ENCODE measurements at regions of chr15 and their contacts with region 1.

Region 1: GRCh38 chr15:84658080-84658787 is at the start of gene NMB:
- DNase-seq: peak; percentile 83
- ATAC-seq: peak; percentile 76
- H3K4me3 Mint-ChIP-seq: peak within 1 kb of the TSS; percentile 83
- H3K27ac Mint-ChIP-seq: peak within 1 kb of the TSS; percentile 88
- H3K4me1 Mint-ChIP-seq: peaks cover 41% of the 10 kb centered on the region
- H3K27me3 Mint-ChIP-seq: no peaks in the 10 kb centered on the region
- CTCF ChIP-seq: no peak
- total RNA-seq, gene NMB: 2.9 and 3.8 TPM in 2 replicates

Region 2: GRCh38 chr15:84600851-84601838 is 57.1 kb before region 1 on chr15 and contains the start of gene ZSCAN2:
- CTCF ChIA-PET with region 1: interaction called, 7 read pairs
- POLR2A ChIA-PET with region 1: interaction called, 13 read pairs
- intact Hi-C with region 1: loop called (anchors 1 kb)
- DNase-seq: peak; percentile 86
- ATAC-seq: peak; percentile 94
- H3K4me3 Mint-ChIP-seq: peak within 1 kb of the TSS; percentile 97
- H3K27ac Mint-ChIP-seq: peak within 1 kb of the TSS; percentile 88
- H3K4me1 Mint-ChIP-seq: peaks cover 73% of the 10 kb centered on the region
- H3K27me3 Mint-ChIP-seq: no peaks in the 10 kb centered on the region
- CTCF ChIP-seq: no peak
- total RNA-seq, gene ZSCAN2: 16.0 and 18.7 TPM in 2 replicates

Region 3: DNA sequence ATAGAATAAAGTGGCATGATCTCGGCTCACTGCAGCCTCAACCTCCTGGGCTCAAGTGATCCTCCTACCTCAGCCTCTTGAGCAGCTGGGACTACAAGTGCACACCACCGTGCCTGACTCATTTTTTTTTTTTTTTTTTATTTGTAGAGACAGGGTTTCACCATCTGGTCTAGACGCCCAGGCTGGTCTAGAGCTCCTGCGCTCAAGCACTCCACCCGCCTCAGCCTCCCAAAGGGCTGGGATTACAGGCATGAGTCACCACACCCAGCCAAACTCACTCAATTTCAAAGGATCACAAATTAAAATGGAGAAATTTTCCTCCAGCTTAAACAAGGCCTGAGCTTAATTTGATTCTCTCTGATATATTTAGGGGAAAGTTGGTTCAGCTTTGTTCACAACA is 27.1 kb after region 1 on chr15:
- CTCF ChIA-PET with region 1: no interaction called
- POLR2A ChIA-PET with region 1: interaction called, 4 read pairs
- intact Hi-C with region 1: loop called (anchors 1 kb)
- DNase-seq: no peak
- ATAC-seq: no peak
- H3K4me3 Mint-ChIP-seq: no peak overlapping the region
- H3K27ac Mint-ChIP-seq: no peak overlapping the region
- H3K4me1 Mint-ChIP-seq: peaks cover 43% of the 10 kb centered on the region
- H3K27me3 Mint-ChIP-seq: no peaks in the 10 kb centered on the region
- CTCF ChIP-seq: no peak

Region 4: GRCh38 chr15:84734794-84735479 is 76.7 kb after region 1 on chr15:
- CTCF ChIA-PET with region 1: interaction called, 4 read pairs
- POLR2A ChIA-PET with region 1: interaction called, 11 read pairs
- intact Hi-C with region 1: no loop called
- DNase-seq: peak; percentile 41
- ATAC-seq: peak; percentile 90
- H3K4me3 Mint-ChIP-seq: peak overlapping the region; percentile 73
- H3K27ac Mint-ChIP-seq: peak overlapping the region; percentile 91
- H3K4me1 Mint-ChIP-seq: peaks cover 46% of the 10 kb centered on the region
- H3K27me3 Mint-ChIP-seq: no peaks in the 10 kb centered on the region
- CTCF ChIP-seq: no peak

Region 5: GRCh38 chr15:84883433-84883832 is 225.2 kb after region 1 on chr15:
- CTCF ChIA-PET with region 1: interaction called, 4 read pairs
- POLR2A ChIA-PET with region 1: interaction called, 7 read pairs
- intact Hi-C with region 1: loop called (anchors 1 kb)
- DNase-seq: no peak
- ATAC-seq: no peak
- H3K4me3 Mint-ChIP-seq: no peak overlapping the region
- H3K27ac Mint-ChIP-seq: no peak overlapping the region
- H3K4me1 Mint-ChIP-seq: no peaks in the 10 kb centered on the region
- H3K27me3 Mint-ChIP-seq: peaks cover 5% of the 10 kb centered on the region
- CTCF ChIP-seq: no peak

Region 6: DNA sequence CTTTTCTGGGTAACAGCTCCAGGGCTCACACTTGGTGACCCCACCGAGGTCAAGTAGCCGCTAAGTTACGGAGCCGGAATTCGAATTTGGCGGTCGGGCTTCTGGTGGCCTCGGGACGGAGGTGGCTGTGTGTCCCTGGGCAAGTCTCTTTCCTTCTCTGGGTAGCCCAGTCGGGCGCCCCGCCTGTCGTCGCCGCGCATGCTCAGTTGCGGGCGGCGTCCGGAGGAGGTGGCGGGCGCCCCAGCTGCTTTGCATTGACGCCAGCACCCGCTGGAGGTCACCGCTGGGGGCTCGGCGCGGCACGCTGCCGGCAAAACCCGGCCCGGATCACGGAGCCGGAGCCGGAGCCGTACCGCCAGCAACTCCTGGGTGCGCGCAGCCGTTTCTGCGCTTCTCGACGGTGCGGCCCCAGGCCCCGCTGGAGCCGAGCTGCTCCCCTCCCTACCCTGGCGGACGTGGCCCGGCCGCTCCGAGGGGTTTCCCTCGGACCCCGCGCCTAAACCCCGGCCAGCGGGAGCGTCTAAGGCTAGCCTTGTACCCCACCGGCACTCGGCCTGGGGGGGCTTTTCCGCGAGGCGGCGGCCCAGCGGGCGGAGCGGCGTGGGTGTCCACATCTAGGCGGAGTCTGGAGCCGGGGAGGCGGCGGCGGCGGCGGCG is 322.9 kb after region 1 on chr15:
- CTCF ChIA-PET with region 1: no interaction called
- POLR2A ChIA-PET with region 1: interaction called, 9 read pairs
- intact Hi-C with region 1: loop called (anchors 1 kb)
- DNase-seq: peak; percentile 98
- ATAC-seq: peak; percentile 78
- H3K4me3 Mint-ChIP-seq: peak overlapping the region; percentile 94
- H3K27ac Mint-ChIP-seq: peak overlapping the region; percentile 93
- H3K4me1 Mint-ChIP-seq: peaks cover 39% of the 10 kb centered on the region
- H3K27me3 Mint-ChIP-seq: no peaks in the 10 kb centered on the region
- CTCF ChIP-seq: no peak